Heart left ventricle (tissue), 16 donors: ENCODE measurements at regions of chr14 and their contacts with region 1.

Region 1: GRCh38 chr14:77076113-77076631 is 21.9 kb upstream of the CIPC start:
- DNase-seq: peak; percentile 79 to 86 (median 85)
- ATAC-seq: peak; percentile 90 to 95 (median 93)
- H3K4me3 ChIP-seq: peak overlapping the region in 10 of 12 donors; percentile 7 to 49 (median 36)
- H3K27ac ChIP-seq: peak overlapping the region; percentile 87 to 96 (median 91)
- H3K4me1 ChIP-seq: peaks cover 0 to 31% (median 24%) of the 10 kb centered on the region in 12 donors
- H3K27me3 ChIP-seq: no peaks in the 10 kb centered on the region
- CTCF ChIP-seq: no peak
- POLR2A ChIP-seq: peak in 1 of 2 donors; percentile 50

Region 2: DNA sequence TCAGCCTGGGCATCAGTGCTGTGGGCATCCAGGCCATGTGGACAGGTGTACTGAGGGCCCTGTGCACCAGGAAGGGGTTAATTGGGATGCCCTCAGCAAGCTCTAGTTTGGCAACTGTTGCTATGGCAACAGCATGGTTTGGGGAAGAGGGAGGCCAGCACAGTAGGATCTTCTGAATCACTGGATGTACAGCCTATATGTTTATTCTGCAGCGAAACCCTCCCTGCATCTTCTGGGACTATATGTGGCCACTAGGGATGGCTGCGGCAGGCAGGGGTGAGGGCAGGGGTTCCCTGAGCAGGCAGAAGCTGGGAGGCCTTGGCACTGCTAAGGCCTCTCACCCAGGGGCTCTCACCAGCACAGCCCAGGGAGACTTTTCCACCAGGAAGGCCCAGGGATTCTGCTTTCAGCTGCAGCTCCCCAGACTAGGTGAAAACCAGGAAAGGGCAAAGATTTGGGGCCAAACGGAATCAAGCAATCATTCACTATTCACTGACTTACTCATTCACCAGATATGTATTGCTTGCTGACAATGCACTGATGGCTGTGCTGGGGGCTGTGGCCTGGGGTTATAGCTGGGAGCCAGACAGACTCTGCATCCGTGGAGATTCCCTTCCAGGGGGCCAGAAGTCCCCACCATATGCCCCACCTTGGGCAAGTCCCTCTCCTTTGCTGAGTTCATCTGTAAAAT is 90.5 kb before region 1 on chr14:
- intact Hi-C with region 1: no loop called
- DNase-seq: no peak
- ATAC-seq: peak in 1 of 4 donors; percentile 12
- H3K4me3 ChIP-seq: no peak overlapping the region
- H3K27ac ChIP-seq: no peak overlapping the region
- H3K4me1 ChIP-seq: peaks cover 0 to 5% (median 0%) of the 10 kb centered on the region in 12 donors
- H3K27me3 ChIP-seq: no peaks in the 10 kb centered on the region
- CTCF ChIP-seq: no peak
- POLR2A ChIP-seq: no peak

Region 3: GRCh38 chr14:77097700-77098528 is 21.7 kb after region 1 on chr14 and contains the start of gene CIPC:
- intact Hi-C with region 1: loop called in 3 of 10 experiments (anchors 2 kb)
- DNase-seq: peak; percentile 100
- ATAC-seq: peak; percentile 89 to 96 (median 92)
- H3K4me3 ChIP-seq: peak within 1 kb of the TSS; percentile 64 to 92 (median 74)
- H3K27ac ChIP-seq: peak within 1 kb of the TSS; percentile 96 to 99 (median 98)
- H3K4me1 ChIP-seq: peaks cover 3 to 64% (median 45%) of the 10 kb centered on the region in 12 donors
- H3K27me3 ChIP-seq: no peaks in the 10 kb centered on the region
- CTCF ChIP-seq: no peak
- POLR2A ChIP-seq: peak; percentile 28 to 67
- total RNA-seq, gene CIPC: 44.5 to 85.9 (median 66.7) TPM

Region 4: GRCh38 chr14:77124345-77125280 is 48.4 kb after region 1 on chr14:
- intact Hi-C with region 1: loop called in 1 of 10 experiments (anchors 2 kb)
- DNase-seq: peak in 4 of 5 donors; percentile 36 to 75 (median 62)
- ATAC-seq: peak in 3 of 4 donors; percentile 49 to 76 (median 69)
- H3K4me3 ChIP-seq: peak overlapping the region; percentile 11 to 65 (median 54)
- H3K27ac ChIP-seq: peak overlapping the region in 1 of 12 donors; percentile 25
- H3K4me1 ChIP-seq: peaks cover 0 to 55% (median 37%) of the 10 kb centered on the region in 12 donors
- H3K27me3 ChIP-seq: peaks cover 0 to 25% (median 0%) of the 10 kb centered on the region in 9 donors
- CTCF ChIP-seq: peak in 11 of 12 donors; percentile 31 to 91 (median 66)
- POLR2A ChIP-seq: no peak